ENCODE measurements at regions of chr22 and their contacts with region 1.

Region 1: GRCh38 chr22:23767673-23768548 is at the start of gene CHCHD10:
- DNase-seq: peak; percentile 86
- CTCF ChIP-seq: peak; percentile 77

Region 2: DNA sequence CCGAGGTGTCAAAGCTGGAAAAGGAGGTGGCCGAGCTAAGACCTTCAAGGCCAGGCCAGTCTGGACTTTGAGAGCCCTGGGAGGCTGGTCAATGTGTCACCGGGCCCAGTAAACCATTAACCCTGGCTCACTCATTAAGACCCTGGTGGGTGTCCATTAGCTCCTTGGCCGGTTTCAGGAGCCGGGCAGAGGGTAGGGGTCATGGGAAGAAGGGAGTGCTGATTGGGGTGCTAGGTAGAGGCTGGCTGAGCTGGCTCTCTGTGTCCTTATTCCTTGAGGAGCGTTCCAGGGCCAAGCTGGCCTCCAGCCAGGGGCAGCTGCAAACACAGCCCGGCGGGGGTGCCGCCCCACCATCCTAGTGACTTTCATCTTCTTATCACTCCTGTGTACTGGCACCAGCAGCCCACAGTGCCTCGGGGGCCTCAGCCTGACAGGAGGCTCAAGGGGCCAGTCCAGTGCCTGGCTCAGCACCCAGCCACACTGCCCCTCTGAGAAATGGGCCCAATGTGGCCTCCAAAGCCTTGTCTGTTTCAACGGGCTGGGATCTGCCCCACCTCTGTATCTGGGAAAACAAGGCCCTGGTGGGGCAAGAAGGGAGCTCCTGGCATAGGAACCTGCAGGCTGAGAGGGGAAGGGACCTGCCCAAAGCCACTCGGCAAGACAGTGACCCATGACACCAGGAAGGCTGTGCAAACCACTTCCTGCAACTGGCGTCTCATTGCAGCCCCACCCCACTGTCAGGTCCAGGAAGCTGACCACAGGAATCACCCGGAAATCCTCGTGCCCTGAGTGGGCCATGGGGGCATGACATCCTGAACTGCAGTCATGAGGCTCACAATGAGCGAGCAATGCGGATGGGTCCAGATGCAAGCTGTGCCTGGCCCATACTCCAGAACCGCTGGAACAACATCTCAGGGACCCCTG is 92.2 kb before region 1 on chr22:
- CTCF ChIA-PET with region 1: no interaction called
- POLR2A ChIA-PET with region 1: no interaction called
- DNase-seq: no peak
- CTCF ChIP-seq: no peak

Region 3: GRCh38 chr22:23781511-23782315 is 13.8 kb after region 1 on chr22:
- CTCF ChIA-PET with region 1: interaction called, 10 read pairs
- POLR2A ChIA-PET with region 1: no interaction called
- DNase-seq: no peak
- CTCF ChIP-seq: no peak

Region 4: DNA sequence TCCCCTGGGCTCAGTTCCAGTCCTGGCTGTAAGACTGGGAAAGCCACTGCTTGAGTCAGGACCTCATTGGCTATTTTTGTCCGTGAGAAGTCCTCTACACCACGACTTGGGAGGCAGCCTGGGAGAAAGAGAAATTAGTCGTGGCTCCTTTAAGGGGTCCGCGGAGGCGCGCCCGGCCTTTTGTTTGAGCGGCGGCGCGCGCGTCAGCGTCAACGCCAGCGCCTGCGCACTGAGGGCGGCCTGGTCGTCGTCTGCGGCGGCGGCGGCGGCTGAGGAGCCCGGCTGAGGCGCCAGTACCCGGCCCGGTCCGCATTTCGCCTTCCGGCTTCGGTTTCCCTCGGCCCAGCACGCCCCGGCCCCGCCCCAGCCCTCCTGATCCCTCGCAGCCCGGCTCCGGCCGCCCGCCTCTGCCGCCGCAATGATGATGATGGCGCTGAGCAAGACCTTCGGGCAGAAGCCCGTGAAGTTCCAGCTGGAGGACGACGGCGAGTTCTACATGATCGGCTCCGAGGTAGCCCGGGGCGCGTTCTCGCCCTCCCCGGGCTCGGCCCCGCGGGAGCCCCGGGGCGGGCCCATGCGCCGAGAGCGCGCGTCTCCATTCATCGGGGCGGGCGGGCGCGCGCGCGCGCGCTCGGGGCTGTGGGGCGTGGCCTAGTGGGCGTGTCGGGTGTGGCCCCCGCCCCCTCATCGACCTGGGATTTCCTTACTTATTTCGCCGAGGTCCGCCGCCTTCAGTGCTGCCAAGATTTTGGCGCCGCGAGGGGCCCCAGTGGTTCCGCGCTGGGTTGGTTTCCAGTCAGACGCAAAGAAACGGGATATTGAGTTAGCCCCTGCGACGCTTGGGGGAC is 19.1 kb after region 1 on chr22 and contains the start of gene SMARCB1:
- CTCF ChIA-PET with region 1: interaction called, 10 read pairs
- POLR2A ChIA-PET with region 1: no interaction called
- DNase-seq: peak; percentile 94
- CTCF ChIP-seq: no peak

Measured in GM10248 (cell line).